ENCODE measurements at regions of chr9 and their contacts with region 1.

Region 1: DNA sequence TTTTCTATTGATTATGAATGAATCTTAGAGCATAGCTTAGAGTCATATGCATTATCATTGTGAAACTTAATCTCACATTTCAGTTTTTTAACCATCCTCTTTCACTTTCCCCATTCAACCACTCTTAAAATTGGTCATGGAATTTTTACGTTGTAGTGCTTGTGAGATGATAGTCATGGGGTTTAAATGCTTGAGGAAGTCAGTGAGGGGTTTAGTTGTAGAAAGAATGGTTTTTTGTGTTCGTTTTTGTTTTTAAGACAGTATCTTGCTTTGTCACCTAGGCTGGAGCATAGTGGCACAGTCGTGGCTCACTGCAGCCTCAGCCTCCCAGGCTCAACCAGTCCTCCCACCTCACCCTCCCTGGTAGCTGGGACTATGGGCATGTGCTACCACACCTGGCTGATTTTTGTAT is 19.6 kb downstream of the UGCG start:
- DNase-seq: no peak
- ATAC-seq: peak; percentile 86
- H3K4me3 Mint-ChIP-seq: peak overlapping the region; percentile 15
- H3K27ac Mint-ChIP-seq: peak overlapping the region; percentile 70
- H3K4me1 Mint-ChIP-seq: peaks cover 33% of the 10 kb centered on the region
- H3K27me3 Mint-ChIP-seq: peaks cover 3% of the 10 kb centered on the region

Region 2: DNA sequence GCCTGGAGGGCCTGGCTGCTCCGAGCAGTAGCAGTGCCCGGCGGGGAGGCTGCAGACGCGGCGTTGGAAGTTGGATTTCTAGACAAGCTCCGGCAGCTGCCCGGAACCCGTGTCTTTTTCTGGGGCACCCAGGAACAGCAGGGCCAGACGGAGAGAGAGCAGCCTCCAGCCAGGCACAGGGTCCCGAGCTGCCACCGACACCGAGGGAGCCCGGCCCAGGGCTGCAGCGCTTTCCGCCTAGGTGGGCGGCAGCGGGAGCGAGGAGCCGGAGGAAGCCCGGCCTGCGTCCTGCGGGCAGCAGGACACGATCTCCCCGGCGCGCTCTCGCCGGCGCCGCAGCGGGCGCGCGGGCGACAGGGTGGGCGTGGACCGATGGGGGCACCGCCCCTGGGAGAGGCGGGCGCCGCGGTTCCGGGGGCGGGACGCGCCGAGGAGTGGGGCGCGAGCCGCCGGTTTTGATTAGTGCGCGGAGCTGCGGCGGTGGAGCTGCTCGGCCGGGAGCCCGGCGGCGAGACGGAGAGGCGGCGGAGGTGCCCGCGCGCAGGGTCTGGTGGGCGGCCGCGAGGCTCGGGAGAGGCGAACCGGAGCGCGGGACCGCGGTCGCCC is 19.8 kb before region 1 on chr9 and contains the start of gene UGCG:
- CTCF ChIA-PET with region 1: interaction called, 15 read pairs
- DNase-seq: peak; percentile 87
- ATAC-seq: peak; percentile 92
- H3K4me3 Mint-ChIP-seq: peak within 1 kb of the TSS; percentile 82
- H3K27ac Mint-ChIP-seq: peak within 1 kb of the TSS; percentile 83
- H3K4me1 Mint-ChIP-seq: peaks cover 6% of the 10 kb centered on the region
- H3K27me3 Mint-ChIP-seq: no peaks in the 10 kb centered on the region
- total RNA-seq, gene UGCG: 14.4 to 21.6 TPM

Measured in activated CD8-positive, alpha-beta memory T cell treated with anti-CD3 and anti-CD28 coated beads, Interleukin-2, amount 10 ng/mL, durations not matched to agents 7 days and 5 days (primary cell).